ENCODE measurements at regions of chr16 and their contacts with region 1.

Region 1: GRCh38 chr16:69396187-69397061 is 10.6 kb upstream of the TERF2 start:
- DNase-seq: peak; percentile 54 to 90
- ATAC-seq: peak; percentile 72 to 97 (median 80)
- H3K4me3 ChIP-seq: no peak overlapping the region
- H3K4me3 Mint-ChIP-seq: peak overlapping the region; percentile 13
- H3K27ac ChIP-seq: peak overlapping the region; percentile 50
- H3K27ac Mint-ChIP-seq: peak overlapping the region; percentile 41 to 81
- H3K4me1 ChIP-seq: no peaks in the 10 kb centered on the region
- H3K4me1 Mint-ChIP-seq: peaks cover 5 to 7% of the 10 kb centered on the region in 2 donors
- H3K27me3 ChIP-seq: no peaks in the 10 kb centered on the region
- H3K27me3 Mint-ChIP-seq: no peaks in the 10 kb centered on the region
- CTCF ChIP-seq: peak; percentile 8

Region 2: DNA sequence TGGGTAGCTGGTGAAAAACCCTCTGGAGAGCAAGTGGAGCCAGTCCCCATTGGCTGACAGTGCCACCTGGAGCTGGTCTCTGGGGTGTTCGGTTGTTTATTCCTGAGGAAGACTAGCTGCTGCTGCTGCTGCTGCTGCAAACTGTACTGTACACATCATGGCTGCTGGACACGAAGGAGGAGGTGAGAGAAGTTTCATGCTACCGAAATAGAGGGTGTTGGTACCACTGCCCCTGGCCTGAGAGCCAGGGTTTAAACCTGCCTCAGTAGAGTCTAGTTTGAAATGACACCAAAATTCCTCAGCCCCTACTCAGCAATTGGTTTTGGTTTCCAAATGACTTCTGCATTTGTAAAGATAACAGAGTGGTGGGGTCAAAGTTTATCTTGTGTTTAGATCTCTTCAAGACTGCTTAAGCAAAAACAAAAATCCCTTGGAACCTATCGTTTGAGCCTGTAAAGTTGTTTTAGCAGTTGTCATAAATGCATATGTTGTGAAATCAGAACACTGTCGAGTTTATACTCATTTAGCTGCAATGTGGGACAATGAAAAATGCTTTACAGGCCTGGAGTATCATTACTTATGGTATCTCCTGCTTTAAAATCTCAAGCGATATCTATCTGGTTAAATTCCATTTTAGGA is 68.8 kb after region 1 on chr16:
- intact Hi-C with region 1: loop called (anchors 10 kb)
- DNase-seq: peak; percentile 31 to 46
- ATAC-seq: peak; percentile 79 to 82 (median 82)
- H3K4me3 ChIP-seq: no peak overlapping the region
- H3K4me3 Mint-ChIP-seq: peak overlapping the region; percentile 64
- H3K27ac ChIP-seq: peak overlapping the region; percentile 53
- H3K27ac Mint-ChIP-seq: peak overlapping the region; percentile 91 to 94
- H3K4me1 ChIP-seq: peaks cover 17% of the 10 kb centered on the region
- H3K4me1 Mint-ChIP-seq: peaks cover 45 to 49% of the 10 kb centered on the region in 2 donors
- H3K27me3 ChIP-seq: no peaks in the 10 kb centered on the region
- H3K27me3 Mint-ChIP-seq: no peaks in the 10 kb centered on the region
- CTCF ChIP-seq: peak; percentile 8

Region 3: DNA sequence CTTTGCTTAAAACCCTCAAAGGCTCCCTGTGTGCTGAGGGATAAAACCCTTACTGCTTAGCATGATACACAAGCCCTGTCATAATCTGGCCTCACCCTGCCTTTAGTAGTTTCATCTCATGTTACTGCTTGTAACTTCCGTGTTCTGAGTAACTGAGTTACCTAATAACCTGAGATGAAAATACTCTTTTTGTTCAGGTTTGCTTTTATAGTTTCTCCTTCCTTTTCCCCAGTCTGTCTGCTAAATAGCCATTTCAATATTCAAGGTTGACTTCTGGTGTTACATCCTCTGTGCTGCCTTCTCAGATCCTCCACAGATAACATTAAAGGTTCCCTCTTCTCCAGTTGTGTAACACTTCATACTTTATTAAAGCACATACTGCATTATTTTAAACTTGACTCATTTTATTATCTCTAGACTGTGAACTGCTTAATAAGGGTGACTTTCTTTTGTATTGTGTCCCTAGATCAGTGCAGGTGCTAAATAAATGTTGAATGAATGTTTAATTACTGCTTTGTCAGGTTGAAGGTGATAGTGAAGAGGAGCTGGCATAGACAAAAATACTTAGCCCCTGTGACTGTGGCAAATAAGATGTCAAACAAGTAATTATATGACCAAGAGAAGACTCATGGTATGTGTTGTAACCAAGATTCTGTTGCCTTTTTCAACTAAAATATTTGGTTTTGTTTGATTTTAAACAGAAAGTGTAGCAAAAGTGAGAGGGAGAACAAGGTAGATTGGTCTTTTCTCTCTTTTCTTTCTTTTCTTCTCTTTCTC is 217.1 kb after region 1 on chr16:
- intact Hi-C with region 1: loop called (anchors 10 kb)
- DNase-seq: no peak
- ATAC-seq: peak; percentile 38 to 59 (median 48)
- H3K4me3 ChIP-seq: no peak overlapping the region
- H3K4me3 Mint-ChIP-seq: no peak overlapping the region
- H3K27ac ChIP-seq: no peak overlapping the region
- H3K27ac Mint-ChIP-seq: peak overlapping the region; percentile 35 to 67
- H3K4me1 ChIP-seq: peaks cover 3% of the 10 kb centered on the region
- H3K4me1 Mint-ChIP-seq: peaks cover 64% of the 10 kb centered on the region in 2 donors
- H3K27me3 ChIP-seq: no peaks in the 10 kb centered on the region
- H3K27me3 Mint-ChIP-seq: no peaks in the 10 kb centered on the region
- CTCF ChIP-seq: no peak